Esophagus squamous epithelium (tissue), 5 donors: ENCODE measurements at regions of chr10 and their contacts with region 1.

Region 1: DNA sequence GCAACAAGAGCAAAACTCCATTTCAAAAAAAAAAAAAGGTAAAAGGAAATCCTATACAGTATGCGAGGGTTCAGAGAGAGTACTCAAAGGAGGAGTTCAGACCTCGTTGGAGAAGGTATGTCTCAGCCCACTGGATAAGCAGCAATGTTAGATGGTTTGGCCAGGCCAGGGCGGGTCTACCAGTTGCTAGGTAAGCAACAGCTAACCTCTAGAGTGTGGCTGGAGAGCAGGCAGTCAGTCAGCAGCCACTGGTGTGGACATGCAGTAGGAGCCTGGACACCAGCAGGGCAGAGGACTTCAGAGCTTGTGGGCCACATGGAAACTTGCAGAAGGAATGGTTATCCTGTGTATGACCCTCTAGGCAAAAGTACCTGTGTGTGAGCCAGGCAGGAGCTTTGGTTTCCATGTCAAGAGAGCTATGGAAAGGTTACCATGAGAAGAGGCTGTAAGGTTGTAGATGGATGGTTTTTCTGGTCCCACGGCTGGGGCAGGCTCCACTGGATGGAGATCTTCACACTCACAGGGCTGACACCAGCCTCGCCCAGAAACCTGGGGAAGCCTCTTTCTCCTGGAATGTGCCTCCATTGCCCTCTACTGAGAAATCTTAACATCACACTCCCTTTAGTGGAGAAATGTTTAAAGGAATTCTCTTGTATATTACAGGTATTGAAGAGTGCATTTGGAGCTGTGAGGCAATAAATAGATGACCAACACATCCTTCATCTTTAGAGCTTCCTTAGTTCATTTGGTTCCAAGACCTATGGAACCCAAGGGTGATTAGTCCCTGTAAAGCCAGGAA is 63.6 kb downstream of the CCDC186 start:
- DNase-seq: no peak
- H3K4me3 ChIP-seq: no peak overlapping the region
- H3K27ac ChIP-seq: no peak overlapping the region
- H3K4me1 ChIP-seq: no peaks in the 10 kb centered on the region
- H3K27me3 ChIP-seq: peaks cover 0 to 9% (median 0%) of the 10 kb centered on the region in 4 donors
- CTCF ChIP-seq: peak in 2 of 6 experiments; percentile 27 to 49
- POLR2A ChIP-seq: no peak

Region 2: GRCh38 chr10:113704637-113705343 is 405.6 kb before region 1 on chr10:
- intact Hi-C with region 1: loop called (anchors 10 kb)
- DNase-seq: no peak
- H3K4me3 ChIP-seq: no peak overlapping the region
- H3K27ac ChIP-seq: no peak overlapping the region
- H3K4me1 ChIP-seq: peaks cover 0 to 43% (median 0%) of the 10 kb centered on the region in 3 donors
- H3K27me3 ChIP-seq: no peaks in the 10 kb centered on the region
- CTCF ChIP-seq: peak in 5 of 6 experiments; percentile 42 to 66 (median 57)
- POLR2A ChIP-seq: no peak

Region 3: DNA sequence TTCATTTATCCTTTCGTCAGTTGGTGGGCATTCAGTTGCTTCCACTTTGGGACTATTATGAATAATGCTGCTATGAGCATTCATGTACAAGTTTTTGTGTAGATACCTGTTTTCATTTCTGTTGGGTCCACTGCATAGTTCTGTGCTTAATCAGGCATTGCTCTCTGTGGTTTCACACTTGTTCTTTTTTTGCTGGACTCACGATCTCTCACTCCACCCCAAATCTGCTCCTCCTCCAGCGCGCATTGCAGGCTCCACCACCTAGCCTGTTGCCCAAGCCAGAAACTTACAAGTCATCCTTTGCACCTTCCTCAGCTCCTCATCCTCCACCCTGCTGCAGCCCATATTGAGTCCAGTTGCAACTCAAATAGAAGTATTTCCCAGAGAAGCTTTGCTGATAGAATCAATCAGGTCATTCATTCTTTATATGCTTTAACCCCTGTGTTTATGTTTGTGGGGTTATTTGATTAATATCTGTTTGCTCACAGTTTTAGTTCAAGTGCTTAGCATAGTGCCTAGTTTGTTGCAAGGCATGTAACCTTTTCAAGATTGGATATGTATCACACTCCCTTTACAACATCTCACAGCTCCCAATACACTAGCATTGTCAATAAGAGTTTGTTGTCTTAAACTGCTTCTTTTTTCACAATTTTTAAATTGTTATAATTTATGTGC is 310.6 kb after region 1 on chr10:
- intact Hi-C with region 1: no loop called
- DNase-seq: no peak
- H3K4me3 ChIP-seq: no peak overlapping the region
- H3K27ac ChIP-seq: no peak overlapping the region
- H3K4me1 ChIP-seq: peaks cover 0 to 9% (median 0%) of the 10 kb centered on the region in 3 donors
- H3K27me3 ChIP-seq: no peaks in the 10 kb centered on the region
- CTCF ChIP-seq: no peak
- POLR2A ChIP-seq: no peak